ENCODE measurements at regions of chr10 and their contacts with region 1.

Region 1: GRCh38 chr10:119120413-119120867 is 16.5 kb downstream of the DENND10 start:
- DNase-seq: no peak
- H3K4me3 Mint-ChIP-seq: no peak overlapping the region
- H3K27ac Mint-ChIP-seq: peak overlapping the region; percentile 42
- H3K4me1 Mint-ChIP-seq: peaks cover 14% of the 10 kb centered on the region
- H3K27me3 Mint-ChIP-seq: no peaks in the 10 kb centered on the region

Region 2: DNA sequence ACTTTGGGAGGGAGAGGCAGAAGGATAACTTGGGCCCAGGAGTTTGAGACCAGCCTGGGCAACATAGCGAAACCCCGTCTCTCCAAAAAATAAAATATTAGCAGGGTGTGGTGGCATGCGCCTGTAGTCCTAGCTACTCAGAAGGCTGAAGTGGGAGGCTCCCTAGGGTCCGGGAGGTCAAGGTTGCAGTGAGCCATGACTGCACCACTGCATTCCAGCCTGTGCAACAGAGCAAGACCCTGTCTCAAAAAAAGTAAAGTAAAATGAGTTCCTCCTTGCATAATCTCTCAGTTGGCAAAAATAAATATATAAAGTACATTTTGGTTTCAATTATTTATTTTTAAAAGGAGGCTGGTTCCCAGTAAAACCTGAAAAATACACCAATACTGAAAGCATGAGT is 79.1 kb before region 1 on chr10:
- intact Hi-C with region 1: no loop called
- DNase-seq: no peak
- H3K4me3 Mint-ChIP-seq: no peak overlapping the region
- H3K27ac Mint-ChIP-seq: no peak overlapping the region
- H3K4me1 Mint-ChIP-seq: peaks cover 17% of the 10 kb centered on the region
- H3K27me3 Mint-ChIP-seq: no peaks in the 10 kb centered on the region

Region 3: GRCh38 chr10:119103903-119104652 is 16.4 kb before region 1 on chr10 and contains the start of gene DENND10:
- intact Hi-C with region 1: no loop called
- DNase-seq: peak; percentile 67
- H3K4me3 Mint-ChIP-seq: peak within 1 kb of the TSS; percentile 86
- H3K27ac Mint-ChIP-seq: peak within 1 kb of the TSS; percentile 31
- H3K4me1 Mint-ChIP-seq: peaks cover 33% of the 10 kb centered on the region
- H3K27me3 Mint-ChIP-seq: no peaks in the 10 kb centered on the region
- total RNA-seq, gene DENND10: 26.0 and 26.2 TPM in 2 replicates

Region 4: DNA sequence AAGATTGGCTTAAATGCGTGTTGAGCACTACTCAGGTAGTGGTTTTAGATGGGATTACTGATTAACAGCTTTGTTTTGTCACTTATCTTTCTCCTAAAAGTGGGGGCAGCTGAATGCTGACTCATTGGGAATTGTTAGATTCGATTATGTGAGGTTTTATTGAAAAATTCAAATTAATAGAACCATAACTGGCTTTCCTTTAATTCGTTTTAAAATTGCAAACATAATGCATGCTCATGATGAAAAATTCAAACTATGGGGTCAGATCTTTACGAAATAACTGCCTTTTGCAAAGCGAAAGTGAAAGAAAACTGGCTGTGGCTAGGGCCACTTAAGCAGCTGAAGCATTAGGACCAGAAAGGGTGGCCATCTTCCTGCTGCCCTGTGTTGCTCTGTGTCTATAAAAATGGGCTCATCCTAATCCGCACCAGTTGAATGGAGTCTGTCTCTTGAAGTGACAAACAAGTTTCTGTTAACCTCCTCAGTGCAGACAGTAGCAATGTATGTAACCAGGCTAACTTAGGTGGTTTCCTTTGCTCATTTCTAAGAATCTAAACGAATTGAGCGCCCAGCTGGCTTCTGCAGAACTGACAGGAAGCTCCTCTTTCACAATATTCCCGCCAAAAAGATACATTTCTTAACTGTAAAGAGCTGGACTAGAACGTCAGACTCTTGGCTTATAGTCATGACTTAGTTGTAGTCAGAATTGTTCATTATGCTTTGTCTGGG is 11.2 kb after region 1 on chr10:
- intact Hi-C with region 1: loop called (anchors 1 kb)
- DNase-seq: peak; percentile 60
- H3K4me3 Mint-ChIP-seq: peak overlapping the region; percentile 82
- H3K27ac Mint-ChIP-seq: peak overlapping the region; percentile 94
- H3K4me1 Mint-ChIP-seq: peaks cover 62% of the 10 kb centered on the region
- H3K27me3 Mint-ChIP-seq: no peaks in the 10 kb centered on the region

Region 5: GRCh38 chr10:119700321-119700954 is 580.0 kb after region 1 on chr10:
- intact Hi-C with region 1: no loop called
- DNase-seq: no peak
- H3K4me3 Mint-ChIP-seq: no peak overlapping the region
- H3K27ac Mint-ChIP-seq: no peak overlapping the region
- H3K4me1 Mint-ChIP-seq: peaks cover 39% of the 10 kb centered on the region
- H3K27me3 Mint-ChIP-seq: no peaks in the 10 kb centered on the region

Measured in activated T-helper 2 cell treated with anti-CD3 and anti-CD28 coated beads, Interferon-gamma antibody, Interleukin-2, Interleukin-4, amounts not matched to agents 10 μg/mL and 5 μg/mL and 100 μg/mL, durations not matched to agents 14 hours and 24 hours and 36 hours (primary cell).